Sciatic nerve (tissue), 2 donors: ENCODE measurements at regions of chr6 and their contacts with region 1.

Region 1: DNA sequence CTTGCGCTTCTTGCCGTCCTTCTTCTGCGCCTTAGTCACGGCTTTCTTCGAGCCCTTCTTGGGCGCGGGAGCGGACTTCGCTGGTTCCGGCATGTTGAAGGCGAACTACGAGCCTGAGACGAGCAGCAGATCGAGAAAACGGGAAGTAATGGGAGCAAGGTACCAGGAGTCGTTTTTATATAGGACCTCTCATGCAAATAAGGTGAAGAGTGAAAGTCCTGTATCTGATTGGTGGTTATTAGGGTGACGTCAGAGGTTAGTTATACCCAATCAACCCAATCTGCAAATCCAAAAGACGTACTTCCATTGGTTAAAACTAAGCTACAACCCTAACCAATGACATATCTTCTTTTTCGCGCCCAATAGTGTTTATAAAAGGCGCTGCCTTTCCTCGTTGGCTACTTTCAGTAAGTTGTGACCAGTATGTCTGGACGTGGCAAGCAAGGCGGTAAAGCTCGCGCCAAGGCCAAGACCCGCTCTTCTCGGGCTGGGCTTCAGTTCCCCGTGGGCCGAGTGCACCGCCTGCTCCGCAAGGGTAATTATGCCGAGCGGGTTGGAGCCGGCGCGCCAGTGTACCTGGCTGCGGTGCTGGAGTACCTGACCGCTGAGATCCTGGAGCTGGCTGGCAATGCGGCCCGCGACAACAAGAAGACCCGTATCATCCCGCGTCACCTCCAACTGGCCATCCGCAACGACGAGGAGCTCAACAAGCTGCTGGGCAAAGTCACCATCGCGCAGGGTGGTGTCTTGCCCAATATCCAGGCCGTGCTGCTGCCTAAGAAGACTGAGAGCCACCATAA is 100.6 kb upstream of the PRSS16 start:
- DNase-seq: peak; percentile 88
- ATAC-seq: peak; percentile 98

Region 2: GRCh38 chr6:27129095-27129815 is 17.7 kb before region 1 on chr6:
- intact Hi-C with region 1: loop called (anchors 2 kb)
- DNase-seq: no peak
- ATAC-seq: no peak

Region 3: GRCh38 chr6:27275025-27275956 is 128.4 kb after region 1 on chr6:
- intact Hi-C with region 1: no loop called
- DNase-seq: no peak
- ATAC-seq: no peak